HAP-1 (cell line): ENCODE measurements at regions of chr17 and their contacts with region 1.

Region 1: DNA sequence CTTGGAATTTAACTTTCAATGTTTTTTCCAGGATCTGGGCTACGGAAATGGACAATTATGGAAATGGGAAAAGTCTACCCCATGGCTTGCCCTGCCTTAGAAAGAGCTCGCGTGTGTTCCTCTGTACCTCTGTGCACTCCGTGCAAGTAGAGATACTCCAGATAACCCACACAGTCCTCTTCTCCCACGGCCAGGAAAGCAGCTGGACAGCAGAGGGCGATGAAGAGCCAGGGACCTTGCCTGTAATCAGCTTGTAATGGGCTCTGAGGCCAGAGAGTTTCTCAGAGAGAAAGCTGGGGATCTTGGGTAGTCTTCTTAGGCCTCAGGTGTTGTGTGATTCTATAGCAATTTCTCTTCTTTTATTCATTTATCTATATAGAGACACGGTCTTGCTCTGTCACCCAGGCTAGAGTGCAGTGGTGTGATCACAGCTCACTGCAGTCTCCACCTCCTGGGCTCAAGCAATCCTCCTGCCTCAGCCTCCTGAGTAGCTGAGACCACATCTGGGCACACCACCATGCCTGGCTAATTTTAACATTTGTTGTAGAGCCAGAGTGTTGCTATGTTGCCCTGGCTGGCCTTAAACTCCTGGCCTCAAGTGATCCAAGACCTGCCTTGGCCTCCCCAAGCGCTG is 2.4 kb upstream of the SOCS7 start:
- DNase-seq: peak; percentile 70 to 92
- H3K4me3 ChIP-seq: no peak overlapping the region
- H3K4me1 ChIP-seq: peaks cover 22% of the 10 kb centered on the region
- H3K27me3 ChIP-seq: no peaks in the 10 kb centered on the region

Region 2: DNA sequence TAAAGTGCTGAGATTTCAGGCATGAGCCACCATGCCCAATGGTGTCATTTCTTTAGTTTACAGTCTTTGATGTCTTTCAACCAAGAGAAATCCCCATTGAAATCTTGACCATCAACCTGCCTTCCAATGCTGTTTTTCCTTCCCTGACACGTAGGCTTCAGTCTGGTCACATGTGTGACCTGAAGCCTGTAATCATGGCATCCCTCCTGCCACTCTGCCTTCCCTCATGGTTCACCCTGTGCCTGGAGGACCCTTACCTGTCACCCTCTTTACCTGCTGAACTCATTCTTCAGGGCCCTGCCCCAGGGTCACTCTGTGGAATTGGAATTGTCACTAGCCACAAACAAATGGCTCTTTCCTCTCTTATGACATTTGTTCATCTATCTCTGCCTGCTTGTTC is 61.0 kb after region 1 on chr17:
- in situ Hi-C with region 1: loop called (anchors 5 kb)
- DNase-seq: no peak
- H3K4me3 ChIP-seq: no peak overlapping the region
- H3K4me1 ChIP-seq: peaks cover 4% of the 10 kb centered on the region
- H3K27me3 ChIP-seq: no peaks in the 10 kb centered on the region